ENCODE measurements at regions of chr5 and their contacts with region 1.

Region 1: GRCh38 chr5:16508730-16509531 is 43.3 kb upstream of the ZNF622 start:
- DNase-seq: peak; percentile 74
- H3K4me3 Mint-ChIP-seq: peak overlapping the region; percentile 63
- H3K27ac Mint-ChIP-seq: peak overlapping the region; percentile 85
- H3K4me1 Mint-ChIP-seq: peaks cover 31% of the 10 kb centered on the region
- H3K27me3 Mint-ChIP-seq: no peaks in the 10 kb centered on the region
- CTCF ChIP-seq: no peak

Region 2: GRCh38 chr5:16521521-16522483 is 12.9 kb after region 1 on chr5:
- CTCF ChIA-PET with region 1: interaction called, 3 read pairs
- intact Hi-C with region 1: loop called (anchors 1 kb)
- DNase-seq: peak; percentile 45
- H3K4me3 Mint-ChIP-seq: peak overlapping the region; percentile 45
- H3K27ac Mint-ChIP-seq: peak overlapping the region; percentile 90
- H3K4me1 Mint-ChIP-seq: peaks cover 45% of the 10 kb centered on the region
- H3K27me3 Mint-ChIP-seq: no peaks in the 10 kb centered on the region
- CTCF ChIP-seq: no peak

Measured in Calu3 (cell line).